Activated CD4-positive, alpha-beta T cell treated with anti-CD3 and anti-CD28 coated beads for 36 hours (primary cell): ENCODE measurements at regions of chr11 and their contacts with region 1.

Region 1: GRCh38 chr11:34234086-34234740 is 123.6 kb downstream of the ABTB2 start:
- DNase-seq: peak; percentile 89
- ATAC-seq: peak; percentile 93
- H3K4me3 Mint-ChIP-seq: peak overlapping the region; percentile 16
- H3K27ac Mint-ChIP-seq: peak overlapping the region; percentile 72
- H3K4me1 Mint-ChIP-seq: peaks cover 44% of the 10 kb centered on the region
- H3K27me3 Mint-ChIP-seq: peaks cover 3% of the 10 kb centered on the region

Region 2: DNA sequence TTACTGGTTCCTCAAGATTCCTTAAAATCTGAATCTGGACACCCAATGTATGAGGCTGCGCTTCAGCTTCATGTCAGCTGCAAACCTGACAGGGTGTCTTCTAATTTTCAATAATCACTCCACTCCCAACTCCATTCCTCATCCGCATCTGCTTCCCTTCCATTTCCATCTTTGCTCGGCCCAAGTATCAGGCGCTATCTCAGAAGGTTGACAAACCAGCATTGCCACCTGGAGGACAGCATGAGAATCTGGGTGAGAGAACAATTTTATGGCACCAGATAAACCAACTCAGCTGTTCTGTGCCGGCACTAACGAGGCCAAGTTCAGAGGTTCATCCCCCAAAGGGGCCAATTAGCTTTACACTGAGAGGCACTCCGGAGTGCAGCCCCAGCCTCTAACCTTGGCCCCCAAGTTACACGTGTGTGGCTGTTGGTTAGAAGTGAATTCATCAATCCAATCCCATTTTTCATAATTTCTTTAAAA is 263.2 kb before region 1 on chr11:
- CTCF ChIA-PET with region 1: no interaction called
- POLR2A ChIA-PET with region 1: no interaction called
- intact Hi-C with region 1: no loop called
- DNase-seq: peak; percentile 40
- ATAC-seq: peak; percentile 44
- H3K4me3 Mint-ChIP-seq: no peak overlapping the region
- H3K27ac Mint-ChIP-seq: no peak overlapping the region
- H3K4me1 Mint-ChIP-seq: no peaks in the 10 kb centered on the region
- H3K27me3 Mint-ChIP-seq: peaks cover 9% of the 10 kb centered on the region

Region 3: DNA sequence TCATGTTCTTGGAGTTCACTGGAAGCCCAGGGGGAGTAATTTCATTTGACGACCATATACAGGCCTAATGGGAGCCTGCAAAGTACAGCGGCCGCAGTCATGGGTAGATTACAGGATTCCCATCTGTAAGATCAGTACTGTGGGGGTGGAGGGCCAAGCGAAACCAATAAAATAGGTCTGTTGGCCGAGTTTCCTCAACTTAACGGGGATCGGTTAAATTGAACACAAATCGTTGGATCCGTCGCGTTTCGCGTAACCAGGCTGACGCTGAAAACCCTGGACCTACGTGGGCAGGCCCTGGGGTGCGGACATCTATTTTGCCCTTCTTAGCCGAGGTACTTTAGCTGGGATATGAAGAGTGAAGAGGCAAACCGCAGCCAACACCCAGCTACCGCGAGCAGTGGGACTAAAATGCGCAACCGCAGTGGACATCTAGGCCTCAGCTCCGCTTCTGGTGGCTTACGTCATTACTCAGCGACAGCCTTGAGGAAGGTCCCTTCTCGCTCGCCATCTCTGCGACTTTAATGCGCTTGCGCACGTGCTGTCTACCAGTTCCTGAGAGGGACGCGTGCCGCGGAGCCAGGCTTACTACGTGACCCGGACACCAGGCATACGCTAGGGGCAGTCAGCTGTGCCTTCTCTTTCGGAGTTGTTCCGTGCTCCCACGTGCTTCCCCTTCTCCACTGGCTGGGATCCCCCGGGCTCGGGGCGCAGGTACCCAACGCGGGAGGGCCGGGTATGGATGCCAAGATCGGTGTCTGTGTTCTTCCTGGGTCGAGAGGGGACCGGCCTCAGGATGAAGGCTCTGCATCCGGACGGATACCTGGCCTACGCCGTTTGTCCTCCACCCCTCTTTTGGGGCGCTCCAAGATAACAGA is 128.9 kb before region 1 on chr11 and contains the start of gene NAT10:
- CTCF ChIA-PET with region 1: no interaction called
- POLR2A ChIA-PET with region 1: no interaction called
- intact Hi-C with region 1: loop called in 1 of 2 experiments (anchors 1 kb)
- DNase-seq: peak; percentile 98
- ATAC-seq: peak; percentile 93
- H3K4me3 Mint-ChIP-seq: peak within 1 kb of the TSS; percentile 97
- H3K27ac Mint-ChIP-seq: peak within 1 kb of the TSS; percentile 99
- H3K4me1 Mint-ChIP-seq: peaks cover 57% of the 10 kb centered on the region
- H3K27me3 Mint-ChIP-seq: no peaks in the 10 kb centered on the region
- total RNA-seq, gene NAT10: 142 to 147 TPM

Region 4: DNA sequence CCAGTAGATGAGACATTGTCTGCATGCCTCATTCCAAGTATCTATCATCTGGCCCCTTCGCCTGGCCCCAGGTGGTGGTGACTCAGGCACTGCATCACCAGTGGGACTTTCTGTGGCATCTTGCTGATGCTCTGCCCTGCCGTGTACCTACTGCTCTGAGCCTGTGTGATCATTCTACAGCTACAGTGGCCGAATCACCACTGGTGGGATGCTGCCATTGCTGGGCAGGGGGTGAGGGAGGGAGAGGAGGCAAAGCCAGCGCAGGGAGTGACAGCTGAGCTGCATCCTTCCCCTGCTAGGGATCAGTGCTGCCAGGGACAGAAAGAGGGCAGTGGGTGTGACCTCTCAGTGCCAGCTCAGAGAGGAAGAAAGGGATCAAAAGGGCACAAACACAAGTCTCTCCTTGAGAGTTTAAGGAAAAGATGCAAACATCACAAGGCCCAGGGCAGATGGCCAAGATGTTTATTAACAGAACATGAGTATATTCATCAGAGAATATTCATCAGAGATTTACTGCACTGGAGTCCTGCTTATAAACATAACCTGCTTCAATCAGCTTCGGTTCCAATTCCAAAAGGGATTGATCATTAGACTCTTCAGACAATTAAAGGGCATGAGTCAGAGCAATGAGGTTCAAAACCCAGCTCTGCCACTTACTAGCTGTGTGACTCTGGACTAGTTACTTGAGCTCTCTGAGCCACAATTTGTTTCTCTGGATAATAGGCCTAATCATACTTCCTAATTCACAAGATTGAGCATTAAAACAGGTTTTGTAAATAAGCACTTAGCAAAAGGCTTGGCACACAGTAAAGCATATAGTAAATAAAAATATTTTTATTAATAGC is 19.0 kb before region 1 on chr11:
- CTCF ChIA-PET with region 1: interaction called, 10 read pairs
- POLR2A ChIA-PET with region 1: interaction called, 3 read pairs
- intact Hi-C with region 1: loop called (anchors 1 kb)
- DNase-seq: peak; percentile 92
- ATAC-seq: peak; percentile 99
- H3K4me3 Mint-ChIP-seq: no peak overlapping the region
- H3K27ac Mint-ChIP-seq: peak overlapping the region; percentile 74
- H3K4me1 Mint-ChIP-seq: peaks cover 22% of the 10 kb centered on the region
- H3K27me3 Mint-ChIP-seq: peaks cover 6% of the 10 kb centered on the region

Region 5: GRCh38 chr11:34250732-34251639 is 16.8 kb after region 1 on chr11:
- CTCF ChIA-PET with region 1: interaction called, 13 read pairs
- POLR2A ChIA-PET with region 1: interaction called, 6 read pairs
- intact Hi-C with region 1: loop called (anchors 1 kb)
- DNase-seq: peak; percentile 86
- ATAC-seq: peak; percentile 98
- H3K4me3 Mint-ChIP-seq: no peak overlapping the region
- H3K27ac Mint-ChIP-seq: no peak overlapping the region
- H3K4me1 Mint-ChIP-seq: peaks cover 60% of the 10 kb centered on the region
- H3K27me3 Mint-ChIP-seq: peaks cover 20% of the 10 kb centered on the region

Region 6: DNA sequence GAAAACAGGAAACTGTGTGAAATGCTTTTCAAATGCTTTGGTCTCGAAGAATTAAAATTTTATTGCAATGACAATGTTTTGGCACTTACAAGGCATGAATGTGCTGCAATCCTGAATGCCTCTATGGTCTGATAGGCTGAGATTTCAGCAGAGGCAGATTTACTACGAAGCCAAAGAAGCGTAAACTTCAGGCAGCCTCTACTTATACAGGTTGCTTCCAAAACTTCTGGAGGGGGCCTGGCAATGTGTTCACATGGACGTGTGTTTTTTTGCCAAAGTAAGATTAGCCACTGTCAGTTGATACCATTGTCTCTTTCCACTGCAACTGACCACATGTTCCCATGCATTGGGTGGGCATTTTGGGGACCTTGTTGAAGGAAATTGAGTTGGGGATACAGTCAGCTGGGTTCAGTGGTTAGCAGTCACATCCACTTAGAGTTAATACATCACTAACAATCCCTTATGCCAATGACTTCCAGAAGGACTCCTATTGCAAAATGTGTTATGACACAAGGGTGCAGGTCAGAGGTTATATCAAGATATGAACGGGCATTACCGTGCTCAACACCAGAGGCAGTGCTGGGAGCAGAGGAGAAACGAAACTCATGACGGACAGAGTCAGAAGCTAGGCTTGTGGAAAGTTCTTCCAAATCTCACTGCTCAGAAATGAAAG is 74.8 kb after region 1 on chr11:
- CTCF ChIA-PET with region 1: no interaction called
- POLR2A ChIA-PET with region 1: no interaction called
- intact Hi-C with region 1: loop called in 1 of 2 experiments (anchors 2 kb)
- DNase-seq: no peak
- ATAC-seq: peak; percentile 36
- H3K4me3 Mint-ChIP-seq: no peak overlapping the region
- H3K27ac Mint-ChIP-seq: no peak overlapping the region
- H3K4me1 Mint-ChIP-seq: peaks cover 28% of the 10 kb centered on the region
- H3K27me3 Mint-ChIP-seq: no peaks in the 10 kb centered on the region

Region 7: DNA sequence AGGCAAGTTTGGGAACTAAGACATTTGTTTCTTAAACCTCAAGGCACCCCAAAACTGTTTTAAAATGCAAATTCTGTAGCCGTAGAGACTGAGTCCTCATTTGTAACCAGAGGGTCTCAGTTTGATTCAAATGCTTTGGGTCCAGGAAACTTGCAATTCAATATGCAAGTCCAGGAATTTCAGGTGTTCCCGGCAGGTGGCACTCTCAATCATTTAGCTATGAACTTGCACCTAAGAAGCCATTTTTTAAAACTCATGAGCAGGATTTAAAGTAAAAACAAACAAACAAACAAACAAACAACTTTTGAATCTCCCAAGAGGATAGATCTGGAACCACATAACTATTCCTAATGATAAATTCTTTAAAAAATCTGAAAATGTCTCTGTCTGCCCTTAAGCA is 132.3 kb after region 1 on chr11:
- CTCF ChIA-PET with region 1: interaction called, 3 read pairs
- POLR2A ChIA-PET with region 1: no interaction called
- intact Hi-C with region 1: loop called in 1 of 2 experiments (anchors 1 kb)
- DNase-seq: peak; percentile 46
- ATAC-seq: no peak
- H3K4me3 Mint-ChIP-seq: no peak overlapping the region
- H3K27ac Mint-ChIP-seq: no peak overlapping the region
- H3K4me1 Mint-ChIP-seq: peaks cover 13% of the 10 kb centered on the region
- H3K27me3 Mint-ChIP-seq: peaks cover 10% of the 10 kb centered on the region